MCF 10A (cell line): ENCODE measurements at regions of chr10 and their contacts with region 1.

Region 1: GRCh38 chr10:95363303-95363912 is 72.6 kb upstream of the PDLIM1 start:
- DNase-seq: peak; percentile 84
- H3K4me3 Mint-ChIP-seq: no peak overlapping the region
- H3K27ac Mint-ChIP-seq: no peak overlapping the region
- H3K4me1 Mint-ChIP-seq: peaks cover 16% of the 10 kb centered on the region
- H3K27me3 Mint-ChIP-seq: peaks cover 18% of the 10 kb centered on the region
- CTCF ChIP-seq: peak; percentile 86

Region 2: DNA sequence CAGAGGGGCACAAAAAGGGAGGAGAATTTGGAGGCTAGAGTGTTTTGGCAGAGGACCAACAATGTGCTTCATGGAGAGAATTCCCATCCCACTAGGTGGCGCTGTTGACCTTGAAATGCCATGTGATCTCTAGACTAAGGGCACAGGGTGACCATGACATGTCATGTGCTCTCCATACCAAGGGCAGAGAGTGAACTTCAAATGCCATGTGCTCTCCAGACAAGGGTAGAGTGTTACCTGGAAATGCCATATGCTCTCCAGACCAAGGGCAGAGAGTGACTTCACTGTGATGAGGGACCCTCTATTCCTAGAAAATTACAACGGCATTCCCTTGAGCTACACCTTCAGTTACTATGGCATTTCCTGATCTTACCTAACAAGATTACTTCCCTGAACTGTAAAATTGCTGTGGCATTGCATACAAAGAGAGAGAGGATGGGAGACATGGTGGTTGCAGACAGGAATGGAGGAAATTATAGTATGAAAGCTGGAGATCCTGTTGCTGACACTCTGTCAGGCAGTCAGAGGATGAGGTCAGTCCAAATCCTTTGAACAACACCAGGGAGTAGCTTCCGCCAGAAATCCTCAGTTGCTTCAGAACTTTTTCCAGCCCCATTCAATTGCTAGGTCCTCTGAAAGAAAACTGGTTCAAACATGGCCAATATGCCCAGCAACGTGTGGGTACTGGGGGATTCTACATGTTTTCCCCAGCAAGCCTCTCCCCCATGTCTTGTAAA is 230.2 kb before region 1 on chr10:
- CTCF ChIA-PET with region 1: interaction called, 8 read pairs
- POLR2A ChIA-PET with region 1: no interaction called
- intact Hi-C with region 1: loop called (anchors 1 kb)
- DNase-seq: peak; percentile 88
- H3K4me3 Mint-ChIP-seq: no peak overlapping the region
- H3K27ac Mint-ChIP-seq: no peak overlapping the region
- H3K4me1 Mint-ChIP-seq: no peaks in the 10 kb centered on the region
- H3K27me3 Mint-ChIP-seq: peaks cover 15% of the 10 kb centered on the region
- CTCF ChIP-seq: peak; percentile 71

Region 3: DNA sequence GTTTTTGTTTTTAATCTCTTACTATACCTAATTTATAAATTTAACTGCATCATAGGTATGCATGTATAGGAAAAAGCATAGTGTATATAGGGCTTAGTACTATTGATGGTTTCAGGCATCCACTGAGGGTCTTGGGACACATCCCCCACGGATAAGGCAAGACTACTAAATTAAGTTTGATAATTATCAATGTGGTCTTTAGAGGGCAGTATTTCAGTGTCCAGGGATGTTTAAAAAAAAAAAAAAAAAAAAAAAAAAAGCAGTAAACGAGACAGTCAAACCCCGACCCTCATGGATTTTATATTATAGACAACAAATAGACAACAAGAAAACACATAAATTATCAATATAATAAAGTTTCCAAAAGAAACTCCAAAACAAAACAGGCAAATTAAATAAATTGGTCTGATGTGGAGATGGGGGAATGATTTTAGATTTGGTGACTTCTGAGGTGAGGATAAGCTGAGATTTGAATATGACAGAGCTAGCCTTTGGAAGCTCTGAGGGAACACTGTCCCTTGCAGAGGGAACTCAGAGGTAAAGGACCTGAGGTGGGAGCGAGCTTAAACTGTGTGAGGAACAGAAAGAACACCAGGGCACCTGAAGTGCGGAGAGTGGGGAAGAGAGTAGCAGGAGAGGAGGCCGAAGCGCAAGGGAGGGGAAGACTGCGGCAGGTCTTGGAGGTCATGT is 154.6 kb before region 1 on chr10:
- CTCF ChIA-PET with region 1: interaction called, 38 read pairs
- POLR2A ChIA-PET with region 1: no interaction called
- intact Hi-C with region 1: loop called (anchors 1 kb)
- DNase-seq: peak; percentile 20
- H3K4me3 Mint-ChIP-seq: no peak overlapping the region
- H3K27ac Mint-ChIP-seq: no peak overlapping the region
- H3K4me1 Mint-ChIP-seq: no peaks in the 10 kb centered on the region
- H3K27me3 Mint-ChIP-seq: no peaks in the 10 kb centered on the region
- CTCF ChIP-seq: peak; percentile 29

Region 4: GRCh38 chr10:95290461-95291364 is 72.7 kb before region 1 on chr10 and contains the start of gene PDLIM1:
- CTCF ChIA-PET with region 1: interaction called, 8 read pairs
- POLR2A ChIA-PET with region 1: no interaction called
- intact Hi-C with region 1: loop called (anchors 2 kb)
- DNase-seq: peak; percentile 56
- H3K4me3 Mint-ChIP-seq: peak within 1 kb of the TSS; percentile 87
- H3K27ac Mint-ChIP-seq: peak within 1 kb of the TSS; percentile 46
- H3K4me1 Mint-ChIP-seq: peaks cover 18% of the 10 kb centered on the region
- H3K27me3 Mint-ChIP-seq: no peaks in the 10 kb centered on the region
- CTCF ChIP-seq: peak; percentile 21
- total RNA-seq, gene PDLIM1: 74.6 and 98.1 TPM in 2 replicates

Region 5: GRCh38 chr10:95350219-95350829 is 13.1 kb before region 1 on chr10:
- CTCF ChIA-PET with region 1: interaction called, 63 read pairs
- POLR2A ChIA-PET with region 1: no interaction called
- intact Hi-C with region 1: no loop called
- DNase-seq: peak; percentile 74
- H3K4me3 Mint-ChIP-seq: no peak overlapping the region
- H3K27ac Mint-ChIP-seq: no peak overlapping the region
- H3K4me1 Mint-ChIP-seq: peaks cover 18% of the 10 kb centered on the region
- H3K27me3 Mint-ChIP-seq: no peaks in the 10 kb centered on the region
- CTCF ChIP-seq: no peak